ENCODE measurements at regions of chr6 and their contacts with region 1.

Region 1: DNA sequence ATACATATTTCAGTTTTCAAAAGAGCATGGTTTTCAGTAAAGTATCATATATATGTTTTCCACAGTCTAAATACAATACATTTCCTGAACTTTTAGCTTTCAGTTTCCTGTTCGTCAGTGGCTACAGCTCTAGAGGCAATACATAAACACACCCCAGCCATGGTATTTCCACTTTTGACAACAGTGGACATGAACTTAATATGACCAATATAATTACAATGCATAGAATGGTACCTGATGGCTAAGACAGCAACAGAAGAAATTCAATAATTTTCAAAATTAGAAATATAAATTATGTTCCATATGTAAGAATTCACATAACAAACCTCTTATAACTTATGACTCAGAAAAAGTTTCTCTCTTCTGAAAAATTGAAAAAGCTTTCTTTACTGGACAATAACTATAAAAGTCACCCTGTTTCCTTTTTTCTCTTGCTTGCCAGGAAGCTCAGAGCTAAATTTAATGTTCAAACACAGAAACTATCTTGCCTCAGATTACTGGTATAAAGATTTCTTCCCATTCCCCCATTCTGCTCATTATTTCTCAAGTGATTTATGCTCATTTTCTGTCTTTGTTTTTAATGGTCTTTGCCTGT is 19.2 kb downstream of the FKBP5 start:
- DNase-seq: no peak
- H3K4me3 ChIP-seq: no peak overlapping the region
- CTCF ChIP-seq: no peak

Region 2: GRCh38 chr6:35596448-35597442 is 72.8 kb before region 1 on chr6:
- in situ Hi-C with region 1: loop called (anchors 5 kb)
- DNase-seq: peak; percentile 78
- H3K4me3 ChIP-seq: no peak overlapping the region
- CTCF ChIP-seq: no peak

Region 3: GRCh38 chr6:35624341-35625070 is 45.0 kb before region 1 on chr6:
- in situ Hi-C with region 1: loop called (anchors 5 kb)
- DNase-seq: peak; percentile 15
- H3K4me3 ChIP-seq: no peak overlapping the region
- CTCF ChIP-seq: peak; percentile 48

Measured in astrocyte of the cerebellum (primary cell).